Naive thymus-derived CD4-positive, alpha-beta T cell (primary cell): ENCODE measurements at regions of chr2 and their contacts with region 1.

Region 1: DNA sequence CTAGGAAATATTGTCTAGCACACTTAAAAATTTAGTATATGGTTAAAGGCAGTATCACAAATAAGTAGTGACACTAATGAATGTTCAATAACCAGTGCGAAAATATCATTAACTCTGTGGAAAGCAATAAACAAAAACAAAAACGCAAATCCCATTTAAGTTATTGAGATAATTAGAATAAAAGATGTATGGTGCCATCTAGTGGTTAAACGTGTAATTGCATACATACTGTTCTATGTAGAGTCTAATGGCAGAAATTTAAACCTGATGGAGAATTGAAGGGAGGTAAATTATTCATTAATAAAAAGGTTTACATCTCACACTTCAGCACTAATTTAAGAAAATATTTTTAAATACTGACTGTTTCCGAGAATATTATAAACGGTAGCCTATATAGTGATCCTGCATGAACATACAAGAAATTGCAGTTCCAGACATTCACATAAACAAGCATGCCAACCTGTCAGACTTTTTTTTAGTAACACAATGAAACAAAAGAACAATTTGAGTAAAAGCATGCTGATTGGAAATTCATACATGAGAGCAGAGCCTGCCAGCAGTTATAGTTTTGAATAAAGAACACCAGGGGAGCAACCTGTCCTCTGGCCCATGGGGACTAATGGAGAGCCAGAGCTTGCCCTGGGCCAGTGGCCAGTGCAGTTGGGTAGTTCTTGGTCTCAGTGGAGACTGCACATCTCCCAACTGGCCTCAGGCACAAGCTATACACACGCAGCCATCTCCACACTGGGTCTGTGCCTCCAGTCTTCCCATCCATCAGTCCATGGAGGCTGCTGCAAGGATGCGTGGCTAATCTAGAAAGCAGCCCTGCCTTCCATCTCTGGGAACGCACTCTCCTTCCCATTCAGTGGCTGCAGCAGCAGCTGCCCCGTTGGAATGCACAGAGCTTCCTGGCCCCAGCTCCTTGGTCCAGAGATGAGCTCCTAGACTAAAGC is 28.0 kb downstream of the GCG start:
- DNase-seq: peak in 7 of 9 donors; percentile 26 to 69 (median 61)
- ATAC-seq: peak; percentile 85
- H3K4me3 ChIP-seq: no peak overlapping the region
- H3K4me3 Mint-ChIP-seq: no peak overlapping the region
- H3K27ac ChIP-seq: no peak overlapping the region
- H3K27ac Mint-ChIP-seq: no peak overlapping the region
- H3K4me1 ChIP-seq: no peaks in the 10 kb centered on the region
- H3K4me1 Mint-ChIP-seq: peaks cover 0 to 24% (median 6%) of the 10 kb centered on the region in 7 donors
- H3K27me3 ChIP-seq: no peaks in the 10 kb centered on the region
- H3K27me3 Mint-ChIP-seq: peaks cover 0 to 7% (median 0%) of the 10 kb centered on the region in 5 donors

Region 2: GRCh38 chr2:161223139-161223732 is 900.8 kb before region 1 on chr2:
- CTCF ChIA-PET with region 1: no interaction called
- POLR2A ChIA-PET with region 1: no interaction called
- intact Hi-C with region 1: loop called (anchors 1 to 10 kb)
- DNase-seq: peak in 7 of 9 donors; percentile 23 to 60 (median 55)
- ATAC-seq: peak; percentile 83
- H3K4me3 ChIP-seq: no peak overlapping the region
- H3K4me3 Mint-ChIP-seq: no peak overlapping the region
- H3K27ac ChIP-seq: no peak overlapping the region
- H3K27ac Mint-ChIP-seq: peak overlapping the region in 1 of 9 donors; percentile 5
- H3K4me1 ChIP-seq: no peaks in the 10 kb centered on the region
- H3K4me1 Mint-ChIP-seq: peaks cover 0 to 14% (median 0%) of the 10 kb centered on the region in 7 donors
- H3K27me3 ChIP-seq: no peaks in the 10 kb centered on the region
- H3K27me3 Mint-ChIP-seq: no peaks in the 10 kb centered on the region

Region 3: GRCh38 chr2:161308178-161308955 is 815.7 kb before region 1 on chr2 and contains the start of gene PSMD14:
- CTCF ChIA-PET with region 1: no interaction called
- POLR2A ChIA-PET with region 1: no interaction called
- intact Hi-C with region 1: loop called in 1 of 2 experiments (anchors 5 kb)
- DNase-seq: peak; percentile 67 to 88 (median 85)
- ATAC-seq: peak; percentile 95
- H3K4me3 ChIP-seq: peak within 1 kb of the TSS; percentile 94
- H3K4me3 Mint-ChIP-seq: peak within 1 kb of the TSS; percentile 89 to 98 (median 95)
- H3K27ac ChIP-seq: peak within 1 kb of the TSS; percentile 77
- H3K27ac Mint-ChIP-seq: peak within 1 kb of the TSS; percentile 92 to 97 (median 95)
- H3K4me1 ChIP-seq: peaks cover 3 to 19% of the 10 kb centered on the region in 2 donors
- H3K4me1 Mint-ChIP-seq: peaks cover 24 to 65% (median 42%) of the 10 kb centered on the region in 7 donors
- H3K27me3 ChIP-seq: no peaks in the 10 kb centered on the region
- H3K27me3 Mint-ChIP-seq: peaks cover 0 to 9% (median 3%) of the 10 kb centered on the region in 5 donors
- total RNA-seq, gene PSMD14: 13.2 to 69.5 (median 23.2) TPM

Region 4: DNA sequence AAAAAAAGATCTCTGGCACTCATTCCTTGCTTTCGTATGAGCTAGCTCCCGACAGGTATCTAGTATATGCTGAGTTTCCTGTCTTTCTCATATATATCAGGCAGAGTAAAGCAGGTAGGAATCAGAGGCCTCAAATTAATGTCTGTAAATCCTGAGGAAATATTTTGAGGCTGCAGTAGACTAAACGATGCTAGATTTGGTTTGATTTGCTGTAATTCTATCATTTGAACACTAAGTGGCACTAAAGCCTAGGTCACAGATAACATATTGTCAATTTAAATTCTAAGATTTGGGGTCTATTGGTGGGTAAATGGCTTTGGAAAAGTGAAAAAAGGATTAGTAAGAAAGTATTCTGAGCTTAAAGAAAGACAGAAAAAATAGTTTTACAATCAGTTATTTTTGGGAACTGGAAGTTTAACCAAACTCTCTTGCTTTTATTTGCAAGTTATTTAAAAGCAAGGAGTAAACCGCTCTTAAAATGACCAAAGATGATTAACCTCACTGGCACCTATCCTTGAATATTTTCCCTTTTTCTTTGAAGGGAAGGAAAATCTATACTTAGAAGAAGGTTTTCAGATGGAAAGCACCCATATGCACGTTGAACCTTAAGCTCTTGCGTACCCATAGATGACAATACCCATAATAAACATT is 537.4 kb before region 1 on chr2:
- CTCF ChIA-PET with region 1: interaction called, 29 read pairs
- POLR2A ChIA-PET with region 1: no interaction called
- intact Hi-C with region 1: loop called (anchors 1 kb)
- DNase-seq: peak in 6 of 9 donors; percentile 3 to 30 (median 18)
- ATAC-seq: peak; percentile 44
- H3K4me3 ChIP-seq: no peak overlapping the region
- H3K4me3 Mint-ChIP-seq: no peak overlapping the region
- H3K27ac ChIP-seq: no peak overlapping the region
- H3K27ac Mint-ChIP-seq: no peak overlapping the region
- H3K4me1 ChIP-seq: no peaks in the 10 kb centered on the region
- H3K4me1 Mint-ChIP-seq: peaks cover 0 to 3% (median 0%) of the 10 kb centered on the region in 7 donors
- H3K27me3 ChIP-seq: no peaks in the 10 kb centered on the region
- H3K27me3 Mint-ChIP-seq: peaks cover 0 to 27% (median 5%) of the 10 kb centered on the region in 5 donors

Region 5: GRCh38 chr2:161825429-161825828 is 298.7 kb before region 1 on chr2:
- CTCF ChIA-PET with region 1: no interaction called
- POLR2A ChIA-PET with region 1: no interaction called
- intact Hi-C with region 1: no loop called
- DNase-seq: no peak
- ATAC-seq: no peak
- H3K4me3 ChIP-seq: no peak overlapping the region
- H3K4me3 Mint-ChIP-seq: no peak overlapping the region
- H3K27ac ChIP-seq: no peak overlapping the region
- H3K27ac Mint-ChIP-seq: no peak overlapping the region
- H3K4me1 ChIP-seq: no peaks in the 10 kb centered on the region
- H3K4me1 Mint-ChIP-seq: no peaks in the 10 kb centered on the region
- H3K27me3 ChIP-seq: no peaks in the 10 kb centered on the region
- H3K27me3 Mint-ChIP-seq: peaks cover 5 to 9% (median 6%) of the 10 kb centered on the region in 5 donors

Region 6: DNA sequence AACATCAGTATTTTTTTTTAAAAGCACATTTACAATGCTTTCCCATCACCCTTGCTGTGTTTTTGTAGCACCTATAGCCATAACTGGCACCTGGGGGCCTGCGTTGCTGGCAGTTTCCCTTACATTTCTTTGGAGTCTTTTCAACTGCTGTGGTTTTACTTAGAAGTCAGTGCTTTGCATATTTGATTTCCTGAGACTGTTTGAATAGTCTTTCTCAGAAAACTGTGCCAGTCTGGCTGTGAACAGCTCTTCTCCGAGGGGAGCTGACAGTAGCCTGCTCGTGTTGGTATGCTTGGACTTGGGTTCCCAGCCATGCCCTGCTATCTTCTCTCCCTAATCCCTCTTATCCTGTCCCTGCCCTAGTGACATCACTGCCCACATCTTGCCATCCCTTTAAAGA is 131.6 kb before region 1 on chr2:
- CTCF ChIA-PET with region 1: interaction called, 5 read pairs
- POLR2A ChIA-PET with region 1: interaction called, 3 read pairs
- intact Hi-C with region 1: loop called (anchors 1 to 5 kb)
- DNase-seq: peak in 8 of 9 donors; percentile 52 to 78 (median 72)
- ATAC-seq: peak; percentile 86
- H3K4me3 ChIP-seq: peak overlapping the region; percentile 46
- H3K4me3 Mint-ChIP-seq: peak overlapping the region; percentile 80 to 91 (median 86)
- H3K27ac ChIP-seq: peak overlapping the region; percentile 68
- H3K27ac Mint-ChIP-seq: peak overlapping the region; percentile 91 to 100 (median 97)
- H3K4me1 ChIP-seq: peaks cover 26 to 51% of the 10 kb centered on the region in 2 donors
- H3K4me1 Mint-ChIP-seq: peaks cover 35 to 78% (median 66%) of the 10 kb centered on the region in 7 donors
- H3K27me3 ChIP-seq: no peaks in the 10 kb centered on the region
- H3K27me3 Mint-ChIP-seq: no peaks in the 10 kb centered on the region

Region 7: DNA sequence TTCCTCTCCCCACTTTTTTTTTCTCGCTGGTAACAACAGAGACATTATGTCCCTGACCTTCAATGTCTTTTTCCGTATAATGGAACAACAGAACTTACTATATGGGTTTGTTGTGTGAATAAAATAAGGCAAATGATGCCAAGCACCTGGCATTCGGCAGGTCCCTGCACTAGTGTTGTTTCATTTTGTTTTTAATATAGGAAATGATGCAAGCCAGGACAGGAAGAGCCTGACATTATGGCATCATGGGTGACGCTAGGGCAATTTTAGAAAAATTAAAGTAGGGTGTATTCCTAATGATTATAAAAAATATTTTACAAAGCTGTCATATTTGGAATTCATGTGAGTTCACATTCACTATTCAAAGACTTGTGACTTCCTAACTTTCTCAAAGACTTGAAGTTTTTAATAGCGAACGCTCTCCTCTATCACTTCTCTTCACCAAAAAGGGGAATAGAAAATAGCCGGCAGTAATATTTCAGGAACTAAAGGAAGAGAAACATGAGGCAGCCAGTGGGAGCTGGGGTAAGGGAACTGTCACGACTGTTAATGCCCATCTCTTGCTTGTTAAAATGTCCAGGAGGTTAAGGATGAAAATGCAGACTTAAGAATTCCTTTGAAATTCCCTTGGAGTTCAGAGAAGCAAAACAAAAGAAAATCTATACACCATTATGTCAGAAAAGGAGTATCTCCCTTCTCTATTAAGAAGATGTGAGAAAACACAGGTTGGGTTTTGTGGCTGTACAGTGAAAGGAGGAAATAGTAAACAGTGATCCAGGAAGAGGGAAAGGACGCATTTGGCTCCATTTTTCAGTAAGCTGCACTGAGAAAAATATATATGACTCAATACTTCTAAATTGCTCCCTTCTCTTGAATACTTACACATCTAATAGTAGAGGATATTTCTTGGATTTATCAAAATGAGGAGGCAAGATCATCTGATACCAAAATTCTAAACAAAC is 110.3 kb before region 1 on chr2:
- CTCF ChIA-PET with region 1: interaction called, 6 read pairs
- POLR2A ChIA-PET with region 1: interaction called, 7 read pairs
- intact Hi-C with region 1: loop called (anchors 1 to 5 kb)
- DNase-seq: peak in 7 of 9 donors; percentile 30 to 71 (median 55)
- ATAC-seq: peak; percentile 36
- H3K4me3 ChIP-seq: peak overlapping the region; percentile 11
- H3K4me3 Mint-ChIP-seq: peak overlapping the region; percentile 52 to 86 (median 70)
- H3K27ac ChIP-seq: peak overlapping the region; percentile 95
- H3K27ac Mint-ChIP-seq: peak overlapping the region; percentile 94 to 99 (median 98)
- H3K4me1 ChIP-seq: peaks cover 47 to 72% of the 10 kb centered on the region in 2 donors
- H3K4me1 Mint-ChIP-seq: peaks cover 41 to 86% (median 81%) of the 10 kb centered on the region in 7 donors
- H3K27me3 ChIP-seq: no peaks in the 10 kb centered on the region
- H3K27me3 Mint-ChIP-seq: no peaks in the 10 kb centered on the region

Region 8: GRCh38 chr2:162073888-162074645 is 50.0 kb before region 1 on chr2 and contains the start of gene DPP4:
- CTCF ChIA-PET with region 1: interaction called, 3 read pairs
- POLR2A ChIA-PET with region 1: no interaction called
- intact Hi-C with region 1: loop called (anchors 5 kb)
- DNase-seq: peak; percentile 31 to 68 (median 61)
- ATAC-seq: peak; percentile 88
- H3K4me3 ChIP-seq: peak within 1 kb of the TSS; percentile 95
- H3K4me3 Mint-ChIP-seq: peak within 1 kb of the TSS; percentile 92 to 100 (median 98)
- H3K27ac ChIP-seq: peak within 1 kb of the TSS; percentile 84
- H3K27ac Mint-ChIP-seq: peak within 1 kb of the TSS; percentile 86 to 98 (median 94)
- H3K4me1 ChIP-seq: peaks cover 0 to 28% of the 10 kb centered on the region in 2 donors
- H3K4me1 Mint-ChIP-seq: peaks cover 30 to 60% (median 52%) of the 10 kb centered on the region in 7 donors
- H3K27me3 ChIP-seq: no peaks in the 10 kb centered on the region
- H3K27me3 Mint-ChIP-seq: peaks cover 0 to 5% (median 0%) of the 10 kb centered on the region in 5 donors
- total RNA-seq, gene DPP4: 35.7 to 188 (median 41.6) TPM